Esophagus muscularis mucosa (tissue), 4 donors: ENCODE measurements at regions of chr1 and their contacts with region 1.

Region 1: GRCh38 chr1:17045634-17046333 is 8.0 kb downstream of the SDHB start:
- DNase-seq: no peak
- H3K4me3 ChIP-seq: peak overlapping the region; percentile 23 to 39 (median 31)
- H3K27ac ChIP-seq: peak overlapping the region; percentile 11 to 48 (median 32)
- H3K4me1 ChIP-seq: peaks cover 12 to 40% (median 20%) of the 10 kb centered on the region in 4 donors
- H3K27me3 ChIP-seq: no peaks in the 10 kb centered on the region
- CTCF ChIP-seq: peak; percentile 75 to 80 (median 79)
- EP300 ChIP-seq: no peak
- POLR2A ChIP-seq: no peak

Region 2: DNA sequence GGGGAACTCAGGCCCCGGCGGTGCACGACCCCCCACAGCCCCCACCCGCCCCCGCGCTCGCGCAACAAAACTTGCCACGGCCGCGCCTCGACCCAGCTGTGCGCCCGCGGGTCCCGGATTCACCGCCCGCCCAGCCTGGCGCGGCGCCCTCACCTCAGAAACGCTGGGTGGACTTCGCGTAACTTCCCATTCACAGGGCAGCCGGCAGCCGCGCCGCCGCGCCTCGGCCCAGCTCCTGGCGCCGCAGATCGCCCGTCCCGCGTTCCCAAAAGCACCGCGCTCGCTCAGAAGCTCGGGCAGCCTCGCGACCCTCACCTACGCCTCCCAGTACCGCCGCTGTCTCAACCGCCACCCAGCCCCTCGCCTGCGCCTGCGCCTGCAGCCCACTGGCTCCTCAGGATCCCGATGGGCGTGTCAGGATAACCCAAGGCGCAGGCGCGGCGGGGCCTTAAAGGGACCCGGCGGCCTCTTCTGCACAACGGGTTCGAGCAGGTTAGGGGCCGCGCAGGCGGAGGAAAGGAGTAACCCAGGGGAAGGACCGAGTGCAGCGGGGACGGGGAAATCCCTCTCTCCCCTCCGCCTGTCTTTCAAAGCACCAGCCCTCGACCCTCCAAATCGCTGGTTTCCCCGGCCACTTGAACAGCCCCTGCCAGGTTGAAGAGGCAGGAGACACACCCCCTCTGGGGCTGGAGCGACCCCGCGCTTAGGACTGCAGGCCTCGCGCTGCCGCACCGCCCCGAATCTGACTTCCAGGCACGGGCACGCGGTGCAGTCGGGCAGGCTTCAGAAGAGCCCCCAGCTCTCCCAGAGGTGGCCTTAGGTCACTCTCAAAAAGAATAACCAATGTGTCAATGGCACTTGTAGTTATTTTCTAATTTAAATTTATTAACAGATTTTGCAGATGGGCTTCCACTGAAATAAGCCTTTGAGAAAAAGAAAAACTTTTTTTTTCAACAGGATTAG is 432.3 kb before region 1 on chr1 and contains the start of gene NBPF1:
- intact Hi-C with region 1: no loop called
- DNase-seq: peak; percentile 100
- H3K4me3 ChIP-seq: peak within 1 kb of the TSS; percentile 57 to 62 (median 60)
- H3K27ac ChIP-seq: peak within 1 kb of the TSS; percentile 55 to 84 (median 82)
- H3K4me1 ChIP-seq: peaks cover 16 to 31% (median 27%) of the 10 kb centered on the region in 4 donors
- H3K27me3 ChIP-seq: no peaks in the 10 kb centered on the region
- CTCF ChIP-seq: peak in 2 of 3 experiments; percentile 24 to 55
- EP300 ChIP-seq: no peak
- POLR2A ChIP-seq: peak; percentile 49
- total RNA-seq, gene NBPF1: 16.6 to 39.2 (median 28.1) TPM

Region 3: GRCh38 chr1:16946646-16947045 is 99.1 kb before region 1 on chr1:
- intact Hi-C with region 1: loop called (anchors 2 kb)
- DNase-seq: no peak
- H3K4me3 ChIP-seq: no peak overlapping the region
- H3K27ac ChIP-seq: no peak overlapping the region
- H3K4me1 ChIP-seq: peaks cover 0 to under 1% (median under 1%) of the 10 kb centered on the region in 4 donors
- H3K27me3 ChIP-seq: no peaks in the 10 kb centered on the region
- CTCF ChIP-seq: no peak
- EP300 ChIP-seq: no peak
- POLR2A ChIP-seq: no peak

Region 4: GRCh38 chr1:16956775-16957174 is 89.0 kb before region 1 on chr1:
- intact Hi-C with region 1: loop called (anchors 2 kb)
- DNase-seq: no peak
- H3K4me3 ChIP-seq: no peak overlapping the region
- H3K27ac ChIP-seq: no peak overlapping the region
- H3K4me1 ChIP-seq: peaks cover 3 to 22% (median 18%) of the 10 kb centered on the region in 4 donors
- H3K27me3 ChIP-seq: no peaks in the 10 kb centered on the region
- CTCF ChIP-seq: no peak
- EP300 ChIP-seq: no peak
- POLR2A ChIP-seq: no peak

Region 5: GRCh38 chr1:17011439-17012307 is 34.1 kb before region 1 on chr1 and contains the start of gene ATP13A2:
- intact Hi-C with region 1: loop called (anchors 5 kb)
- DNase-seq: no peak
- H3K4me3 ChIP-seq: peak within 1 kb of the TSS; percentile 67 to 94 (median 86)
- H3K27ac ChIP-seq: peak within 1 kb of the TSS; percentile 49 to 73 (median 61)
- H3K4me1 ChIP-seq: peaks cover 27 to 30% (median 29%) of the 10 kb centered on the region in 4 donors
- H3K27me3 ChIP-seq: no peaks in the 10 kb centered on the region
- CTCF ChIP-seq: no peak
- EP300 ChIP-seq: no peak
- POLR2A ChIP-seq: no peak
- total RNA-seq, gene ATP13A2: 16.1 to 30.8 (median 23.2) TPM

Region 6: DNA sequence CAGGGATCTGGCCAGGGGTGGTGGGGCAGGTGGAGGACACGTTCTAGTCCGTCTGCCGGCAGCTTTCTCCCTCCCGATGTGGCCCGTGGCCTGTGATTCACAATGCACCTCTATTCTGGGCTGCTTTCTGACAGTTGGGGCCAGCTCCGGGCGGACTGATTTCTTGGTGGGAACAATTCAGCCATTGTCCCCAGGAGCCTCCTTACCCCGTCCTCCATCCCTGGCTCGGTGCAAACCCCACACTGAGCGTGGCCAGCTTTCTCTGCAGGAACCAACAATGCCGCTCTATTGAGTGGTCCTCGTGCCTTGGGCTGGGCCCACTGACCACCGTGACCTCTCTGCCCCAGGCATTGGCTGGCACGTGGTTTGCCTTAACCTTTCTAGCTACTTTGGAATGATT is 43.7 kb after region 1 on chr1:
- intact Hi-C with region 1: no loop called
- DNase-seq: no peak
- H3K4me3 ChIP-seq: no peak overlapping the region
- H3K27ac ChIP-seq: no peak overlapping the region
- H3K4me1 ChIP-seq: peaks cover 0 to 9% (median 4%) of the 10 kb centered on the region in 4 donors
- H3K27me3 ChIP-seq: no peaks in the 10 kb centered on the region
- CTCF ChIP-seq: no peak
- EP300 ChIP-seq: no peak
- POLR2A ChIP-seq: no peak

Region 7: DNA sequence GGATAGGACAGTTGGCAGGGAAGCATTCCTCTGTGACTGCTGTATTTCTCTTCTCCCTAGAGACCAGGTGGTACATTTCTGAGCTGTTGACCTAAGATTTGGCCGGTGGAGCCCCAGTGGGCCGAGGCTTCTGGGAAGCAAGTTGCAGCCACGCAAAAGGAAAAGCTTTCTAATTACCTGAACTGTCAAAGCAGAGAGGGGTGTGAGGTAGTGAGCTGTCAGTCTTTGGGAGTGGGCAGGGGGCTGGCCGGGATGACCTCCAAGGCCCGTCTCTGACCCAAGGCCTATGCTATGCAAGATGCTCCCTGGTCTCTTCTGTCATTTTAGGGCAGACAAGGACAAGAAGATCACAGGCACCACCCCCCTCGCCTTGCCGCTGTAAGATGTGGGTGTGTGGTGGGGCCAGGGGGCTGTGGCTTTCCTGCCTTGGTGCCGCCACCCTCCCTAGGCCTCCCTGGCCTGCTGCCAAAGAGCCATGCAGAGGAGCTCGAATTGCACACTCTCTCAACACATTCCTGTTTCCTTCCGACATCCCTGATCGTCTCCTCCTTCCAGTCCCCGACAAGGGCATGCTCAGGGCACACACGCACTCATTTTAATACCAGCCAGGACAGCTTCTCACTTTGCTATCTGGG is 166.8 kb after region 1 on chr1:
- intact Hi-C with region 1: no loop called
- DNase-seq: no peak
- H3K4me3 ChIP-seq: no peak overlapping the region
- H3K27ac ChIP-seq: no peak overlapping the region
- H3K4me1 ChIP-seq: peaks cover 0 to 13% (median 6%) of the 10 kb centered on the region in 4 donors
- H3K27me3 ChIP-seq: peaks cover 0 to 70% (median 0%) of the 10 kb centered on the region in 4 donors
- CTCF ChIP-seq: no peak
- EP300 ChIP-seq: no peak
- POLR2A ChIP-seq: no peak

Region 8: GRCh38 chr1:17239420-17239819 is 193.6 kb after region 1 on chr1:
- intact Hi-C with region 1: no loop called
- DNase-seq: no peak
- H3K4me3 ChIP-seq: no peak overlapping the region
- H3K27ac ChIP-seq: no peak overlapping the region
- H3K4me1 ChIP-seq: peaks cover 0 to 4% (median 0%) of the 10 kb centered on the region in 4 donors
- H3K27me3 ChIP-seq: peaks cover 0 to 34% (median 0%) of the 10 kb centered on the region in 4 donors
- CTCF ChIP-seq: no peak
- EP300 ChIP-seq: no peak
- POLR2A ChIP-seq: no peak